H1 (cell line): ENCODE measurements at regions of chr4 and their contacts with region 1.

Region 1: GRCh38 chr4:147096667-147097604 is 151.3 kb upstream of the TTC29 start:
- DNase-seq: no peak
- H3K4me3 ChIP-seq: no peak overlapping the region
- H3K27ac ChIP-seq: no peak overlapping the region
- H3K4me1 ChIP-seq: no peaks in the 10 kb centered on the region
- H3K27me3 ChIP-seq: no peaks in the 10 kb centered on the region
- CTCF ChIP-seq: peak in 2 of 3 experiments; percentile 34 to 51; a peak in 2 of 4 replicates
- EP300 ChIP-seq: no peak
- POLR2A ChIP-seq: no peak
- RAD21 ChIP-seq: peak; percentile 76 to 79

Region 2: DNA sequence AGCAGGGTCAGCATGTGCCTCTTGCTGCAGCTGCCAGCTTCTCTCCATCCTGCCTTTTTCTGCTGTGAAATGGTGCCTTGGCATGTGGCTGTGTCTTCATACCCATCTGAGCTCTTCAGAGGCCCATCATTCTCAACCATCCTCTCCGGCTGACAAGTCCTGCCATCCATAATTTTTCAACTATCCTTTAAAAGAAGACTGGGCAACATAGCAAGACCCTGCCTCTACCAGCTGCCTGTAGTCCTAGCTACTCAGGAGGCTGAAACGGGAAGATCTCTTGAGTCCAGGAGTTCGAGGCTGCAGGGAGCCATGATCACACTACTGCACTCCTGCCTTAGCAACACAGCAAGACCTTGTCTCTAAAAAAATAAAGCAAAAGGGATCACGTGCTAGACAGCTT is 87.1 kb before region 1 on chr4:
- CTCF ChIA-PET with region 1: interaction called, 13 read pairs
- POLR2A ChIA-PET with region 1: no interaction called
- DNase-seq: no peak
- H3K4me3 ChIP-seq: no peak overlapping the region
- H3K27ac ChIP-seq: no peak overlapping the region
- H3K4me1 ChIP-seq: peaks cover 0 to 4% (median under 1%) of the 10 kb centered on the region in 4 experiments; a peak in 2 of 7 replicates
- H3K27me3 ChIP-seq: no peaks in the 10 kb centered on the region
- CTCF ChIP-seq: no peak
- EP300 ChIP-seq: no peak
- POLR2A ChIP-seq: no peak
- RAD21 ChIP-seq: no peak

Region 3: DNA sequence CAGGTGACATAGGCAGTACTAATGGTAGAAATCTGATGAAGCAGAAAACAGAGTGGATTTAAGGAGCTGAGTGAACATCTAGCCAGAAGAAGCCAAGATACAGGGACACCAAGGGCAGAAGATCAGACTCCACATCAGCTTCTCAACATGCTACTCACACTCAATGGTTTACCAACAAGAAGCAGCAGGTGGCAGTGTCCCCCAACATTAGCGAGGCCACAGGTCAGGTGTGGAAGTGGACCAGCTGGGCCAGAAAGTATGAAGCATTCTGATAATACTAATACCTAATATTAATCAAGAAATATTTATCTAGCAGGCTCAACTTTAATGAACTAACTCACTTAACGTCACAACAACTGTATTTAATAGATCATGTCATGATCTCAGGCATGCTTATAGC is 77.9 kb before region 1 on chr4:
- CTCF ChIA-PET with region 1: interaction called, 120 read pairs
- POLR2A ChIA-PET with region 1: no interaction called
- DNase-seq: peak in 1 of 2 experiments; percentile 77
- H3K4me3 ChIP-seq: no peak overlapping the region
- H3K27ac ChIP-seq: no peak overlapping the region
- H3K4me1 ChIP-seq: no peaks in the 10 kb centered on the region
- H3K27me3 ChIP-seq: no peaks in the 10 kb centered on the region
- CTCF ChIP-seq: peak; percentile 71 to 86 (median 84)
- EP300 ChIP-seq: no peak
- POLR2A ChIP-seq: no peak
- RAD21 ChIP-seq: peak; percentile 95 to 97

Region 4: GRCh38 chr4:147029296-147029695 is 67.6 kb before region 1 on chr4:
- CTCF ChIA-PET with region 1: interaction called, 12 read pairs
- POLR2A ChIA-PET with region 1: no interaction called
- DNase-seq: no peak
- H3K4me3 ChIP-seq: no peak overlapping the region
- H3K27ac ChIP-seq: no peak overlapping the region
- H3K4me1 ChIP-seq: no peaks in the 10 kb centered on the region; a peak in 1 of 7 replicates
- H3K27me3 ChIP-seq: no peaks in the 10 kb centered on the region
- CTCF ChIP-seq: no peak
- EP300 ChIP-seq: no peak
- POLR2A ChIP-seq: no peak
- RAD21 ChIP-seq: no peak

Region 5: GRCh38 chr4:147060151-147060931 is 36.6 kb before region 1 on chr4:
- CTCF ChIA-PET with region 1: interaction called, 14 read pairs
- POLR2A ChIA-PET with region 1: no interaction called
- DNase-seq: no peak
- H3K4me3 ChIP-seq: no peak overlapping the region
- H3K27ac ChIP-seq: no peak overlapping the region
- H3K4me1 ChIP-seq: peaks cover 0 to 2% (median 0%) of the 10 kb centered on the region in 4 experiments; a peak in 1 of 7 replicates
- H3K27me3 ChIP-seq: no peaks in the 10 kb centered on the region
- CTCF ChIP-seq: no peak
- EP300 ChIP-seq: no peak
- POLR2A ChIP-seq: no peak
- RAD21 ChIP-seq: no peak

Region 6: DNA sequence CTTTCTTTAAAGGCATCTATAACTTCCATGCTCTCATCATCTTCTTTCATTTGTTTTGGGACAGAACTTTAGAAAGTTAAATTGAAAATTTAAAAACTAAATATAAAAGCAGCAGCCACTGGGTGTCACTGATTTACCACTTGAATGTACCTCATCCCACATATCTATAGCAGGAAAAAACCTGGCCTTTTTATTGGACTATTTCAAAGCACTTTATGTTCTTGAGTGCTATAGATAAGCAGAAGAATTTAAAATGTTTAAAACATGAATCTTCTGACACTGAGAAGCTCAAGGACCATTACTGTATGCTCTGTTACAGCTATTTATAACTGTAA is 14.1 kb after region 1 on chr4:
- CTCF ChIA-PET with region 1: interaction called, 16 read pairs
- POLR2A ChIA-PET with region 1: no interaction called
- DNase-seq: no peak
- H3K4me3 ChIP-seq: no peak overlapping the region
- H3K27ac ChIP-seq: no peak overlapping the region
- H3K4me1 ChIP-seq: no peaks in the 10 kb centered on the region
- H3K27me3 ChIP-seq: no peaks in the 10 kb centered on the region
- CTCF ChIP-seq: no peak
- EP300 ChIP-seq: no peak
- POLR2A ChIP-seq: no peak
- RAD21 ChIP-seq: peak; percentile 43 to 45; a peak in 3 of 4 replicates

Region 7: DNA sequence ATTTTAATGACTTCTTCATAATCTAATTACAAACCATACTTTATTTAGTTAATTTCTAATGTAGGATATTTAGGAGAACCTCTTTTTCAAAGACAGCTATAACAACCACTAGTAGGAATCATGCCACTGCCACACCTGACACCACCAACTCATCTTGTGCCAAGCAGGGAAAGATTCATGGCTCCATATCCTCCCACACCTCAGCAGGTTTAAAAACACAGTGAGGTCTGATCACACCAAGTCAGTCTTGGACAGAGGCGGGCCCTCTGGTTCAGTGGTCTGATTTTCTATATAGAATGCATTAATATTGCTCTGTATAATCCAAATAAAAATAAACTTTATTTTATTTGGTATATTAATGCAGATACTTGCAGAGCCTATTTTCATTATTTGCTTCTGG is 76.4 kb after region 1 on chr4:
- CTCF ChIA-PET with region 1: no interaction called
- POLR2A ChIA-PET with region 1: no interaction called
- DNase-seq: no peak
- H3K4me3 ChIP-seq: no peak overlapping the region
- H3K27ac ChIP-seq: no peak overlapping the region
- H3K4me1 ChIP-seq: no peaks in the 10 kb centered on the region; a peak in 1 of 7 replicates
- H3K27me3 ChIP-seq: no peaks in the 10 kb centered on the region
- CTCF ChIP-seq: no peak
- EP300 ChIP-seq: no peak
- POLR2A ChIP-seq: no peak
- RAD21 ChIP-seq: no peak

Region 8: DNA sequence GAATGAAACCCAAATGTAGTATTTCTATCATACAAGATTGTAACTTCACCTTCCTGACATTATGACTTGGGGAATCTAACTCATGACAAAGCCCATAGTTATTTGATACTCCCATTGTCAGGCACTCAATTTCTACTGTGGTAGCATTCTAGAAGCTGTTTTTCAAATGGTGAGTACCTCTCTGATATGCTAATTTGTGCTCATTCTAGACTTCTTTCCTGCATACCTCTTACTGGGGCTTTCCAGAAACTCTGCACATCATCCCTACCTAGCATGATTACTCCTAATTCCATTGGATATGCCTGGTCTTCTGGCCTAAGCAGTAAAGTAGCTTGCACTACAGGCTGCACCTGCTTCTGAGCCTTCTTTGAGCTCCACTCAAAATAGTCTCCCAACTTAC is 469.8 kb after region 1 on chr4:
- CTCF ChIA-PET with region 1: no interaction called
- POLR2A ChIA-PET with region 1: no interaction called
- DNase-seq: no peak
- H3K4me3 ChIP-seq: no peak overlapping the region
- H3K27ac ChIP-seq: no peak overlapping the region
- H3K4me1 ChIP-seq: 0 out of 7 replicates have a peak, but pooled peaks cover 0 to 6% (median 0%) of the 10 kb centered on the region in 4 experiments
- H3K27me3 ChIP-seq: no peaks in the 10 kb centered on the region
- CTCF ChIP-seq: no peak
- EP300 ChIP-seq: no peak
- POLR2A ChIP-seq: no peak
- RAD21 ChIP-seq: no peak